ENCODE measurements at regions of chr16 and their contacts with region 1.

Region 1: GRCh38 chr16:68264128-68265077 is at the start of gene SLC7A6:
- DNase-seq: peak; percentile 89
- H3K4me3 ChIP-seq: peak within 1 kb of the TSS; percentile 82 to 84
- H3K27ac ChIP-seq: peak within 1 kb of the TSS; percentile 86 to 94
- H3K4me1 ChIP-seq: peaks cover 21% of the 10 kb centered on the region
- H3K27me3 ChIP-seq: no peaks in the 10 kb centered on the region
- CTCF ChIP-seq: peak; percentile 56 to 75 (median 67)
- POLR2A ChIP-seq: no peak
- total RNA-seq, gene SLC7A6: 42.2 to 48.6 TPM

Region 2: DNA sequence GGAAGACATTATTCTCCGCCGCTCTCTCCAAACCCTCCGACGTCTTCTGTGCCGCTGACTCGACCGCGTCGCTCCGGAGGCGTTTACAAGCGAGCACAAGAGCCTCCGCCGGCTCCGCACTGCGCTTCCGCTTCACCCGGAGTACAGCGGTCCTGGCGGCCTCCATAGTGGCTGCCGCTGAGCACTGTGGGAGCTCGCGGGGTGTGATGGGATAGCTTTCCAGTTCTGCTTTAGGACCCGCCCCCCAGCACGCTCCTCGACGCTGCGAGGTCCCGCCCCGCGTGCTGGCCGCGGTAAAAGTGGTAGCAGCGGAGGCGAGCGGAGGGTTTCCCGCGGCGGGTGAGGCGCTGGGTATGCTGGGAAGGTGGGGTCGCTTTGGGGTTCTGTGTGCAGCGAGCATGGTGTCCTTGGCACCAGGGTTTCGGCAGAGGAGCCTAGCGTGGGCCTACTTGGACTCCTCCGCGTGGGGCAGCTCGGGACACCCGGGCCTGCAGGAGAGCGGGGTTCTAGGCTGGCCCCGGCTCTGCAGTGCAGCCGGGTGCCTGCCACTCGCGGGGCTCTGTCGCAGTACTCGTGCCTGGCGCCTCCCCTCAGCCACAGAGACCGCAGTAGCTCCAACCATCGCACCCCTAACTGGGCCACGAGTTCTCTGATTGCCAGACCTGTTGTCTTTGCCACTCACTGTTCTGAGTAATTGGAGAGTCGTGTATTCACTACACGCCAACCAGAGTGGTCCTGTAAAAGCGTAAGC is 46.5 kb after region 1 on chr16 and contains the starts of genes PRMT7 and SLC7A6OS:
- intact Hi-C with region 1: loop called (anchors 5 kb)
- DNase-seq: peak; percentile 97
- H3K4me3 ChIP-seq: peak within 1 kb of the TSS; percentile 67 to 92
- H3K27ac ChIP-seq: peak within 1 kb of the TSS; percentile 31 to 71
- H3K4me1 ChIP-seq: peaks cover 7% of the 10 kb centered on the region
- H3K27me3 ChIP-seq: no peaks in the 10 kb centered on the region
- CTCF ChIP-seq: peak in 2 of 3 experiments; percentile 35 to 47
- POLR2A ChIP-seq: no peak
- total RNA-seq, gene PRMT7: 99.3 to 111 TPM
- total RNA-seq, gene SLC7A6OS: 24.3 to 25.8 TPM

Region 3: DNA sequence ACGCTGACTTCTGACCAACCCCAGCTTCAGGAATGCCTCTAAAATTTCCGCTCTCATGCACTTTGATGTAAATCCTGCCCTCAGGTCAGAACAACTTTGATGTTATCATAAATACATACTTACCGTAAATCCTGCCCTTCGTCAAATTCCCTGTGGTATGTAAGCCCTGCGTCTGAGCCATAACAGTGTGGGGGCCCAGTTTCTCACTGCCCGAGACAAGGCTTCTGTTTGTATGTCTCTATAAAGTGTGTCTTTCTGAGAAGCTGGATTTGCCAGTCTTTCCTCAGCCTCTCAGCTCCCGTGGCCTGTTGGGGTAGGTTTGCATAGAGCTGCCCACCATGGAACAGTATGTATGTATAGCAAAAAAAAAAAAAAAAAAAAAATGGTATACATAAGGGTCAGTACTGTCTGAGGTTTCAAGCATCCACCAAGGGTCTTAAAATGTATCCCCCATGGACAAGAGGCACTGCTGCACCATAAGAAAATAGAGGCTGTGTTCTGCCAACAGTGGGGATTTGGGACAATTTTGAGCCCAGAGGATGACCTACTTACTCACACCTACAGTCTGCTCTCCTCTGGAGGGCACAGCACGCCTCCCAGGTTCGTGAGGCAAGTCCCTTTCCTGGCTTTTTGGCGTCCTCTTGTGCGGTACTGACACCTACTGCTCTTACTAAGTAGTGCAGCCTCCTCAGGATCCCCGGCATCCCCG is 63.9 kb after region 1 on chr16:
- intact Hi-C with region 1: loop called (anchors 2 kb)
- DNase-seq: peak; percentile 86
- H3K4me3 ChIP-seq: no peak overlapping the region
- H3K27ac ChIP-seq: no peak overlapping the region
- H3K4me1 ChIP-seq: no peaks in the 10 kb centered on the region
- H3K27me3 ChIP-seq: no peaks in the 10 kb centered on the region
- CTCF ChIP-seq: peak; percentile 77 to 85 (median 80)
- POLR2A ChIP-seq: no peak

Measured in testis (tissue), 5 donors.